ENCODE measurements at regions of chr12 and their contacts with region 1.

Region 1: GRCh38 chr12:131499160-131499863 is 211.6 kb upstream of the SFSWAP start:
- DNase-seq: no peak

Region 2: DNA sequence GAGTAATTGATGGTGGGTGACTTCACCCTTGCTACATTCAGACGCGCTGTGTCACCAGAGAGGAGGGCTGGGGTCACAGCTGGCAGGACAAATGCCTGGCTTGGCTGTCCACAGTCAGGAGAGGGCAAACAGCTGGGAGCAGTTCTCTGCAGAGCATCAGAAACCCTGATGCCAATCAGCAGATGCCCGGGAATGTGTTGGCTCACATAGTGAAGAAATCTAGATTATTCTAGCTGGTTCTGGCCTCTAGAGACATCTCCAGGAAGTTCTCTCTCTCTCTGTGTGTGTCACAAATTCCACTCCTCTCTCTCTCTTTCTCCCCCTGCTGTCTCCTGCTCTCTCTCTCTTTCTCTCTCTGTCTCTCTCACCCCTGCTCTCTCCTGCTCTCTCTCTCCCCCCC is 214.3 kb before region 1 on chr12:
- in situ Hi-C with region 1: loop called (anchors 10 kb)
- DNase-seq: no peak

Region 3: GRCh38 chr12:131530422-131530821 is 31.1 kb after region 1 on chr12:
- in situ Hi-C with region 1: no loop called
- DNase-seq: no peak

Region 4: GRCh38 chr12:131573631-131574394 is 74.5 kb after region 1 on chr12:
- in situ Hi-C with region 1: no loop called
- DNase-seq: no peak